Breast epithelium (tissue), 4 donors: ENCODE measurements at regions of chr13 and their contacts with region 1.

Region 1: GRCh38 chr13:26557393-26558023 is at the start of gene WASF3:
- DNase-seq: peak; percentile 85 to 92
- H3K4me3 ChIP-seq: peak within 1 kb of the TSS; percentile 78 to 84 (median 81)
- H3K27ac ChIP-seq: peak within 1 kb of the TSS; percentile 55 to 86
- H3K4me1 ChIP-seq: no peaks in the 10 kb centered on the region
- H3K27me3 ChIP-seq: peaks cover 0 to 3% of the 10 kb centered on the region in 2 donors
- CTCF ChIP-seq: no peak
- POLR2A ChIP-seq: no peak
- total RNA-seq, gene WASF3: 15.2 to 67.0 (median 19.3) TPM

Region 2: DNA sequence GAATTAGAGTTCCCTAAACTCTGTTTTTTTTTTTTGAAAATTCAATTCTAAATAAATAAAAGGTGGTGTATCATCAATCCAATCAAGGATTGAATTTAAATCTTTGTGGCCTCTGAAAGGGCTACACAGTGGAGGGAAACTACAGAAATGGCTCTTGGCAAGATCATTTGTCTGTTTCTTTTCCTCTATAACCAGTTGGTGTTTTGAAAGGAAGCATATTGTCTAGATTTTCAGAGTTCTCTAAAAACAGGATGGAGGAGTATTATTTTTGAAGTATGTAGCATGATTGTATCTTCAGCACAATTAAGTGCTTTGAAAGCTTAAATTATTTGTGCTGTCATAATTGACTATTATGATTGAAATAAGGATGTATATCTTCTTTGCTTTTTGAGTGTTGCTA is 29.7 kb after region 1 on chr13:
- intact Hi-C with region 1: loop called (anchors 2 kb)
- DNase-seq: no peak
- H3K4me3 ChIP-seq: no peak overlapping the region
- H3K27ac ChIP-seq: no peak overlapping the region
- H3K4me1 ChIP-seq: no peaks in the 10 kb centered on the region
- H3K27me3 ChIP-seq: no peaks in the 10 kb centered on the region
- CTCF ChIP-seq: no peak
- POLR2A ChIP-seq: no peak

Region 3: GRCh38 chr13:27043013-27043412 is 485.5 kb after region 1 on chr13:
- intact Hi-C with region 1: no loop called
- DNase-seq: peak; percentile 31 to 63
- H3K4me3 ChIP-seq: no peak overlapping the region
- H3K27ac ChIP-seq: no peak overlapping the region
- H3K4me1 ChIP-seq: no peaks in the 10 kb centered on the region
- H3K27me3 ChIP-seq: no peaks in the 10 kb centered on the region
- CTCF ChIP-seq: no peak
- POLR2A ChIP-seq: no peak

Region 4: DNA sequence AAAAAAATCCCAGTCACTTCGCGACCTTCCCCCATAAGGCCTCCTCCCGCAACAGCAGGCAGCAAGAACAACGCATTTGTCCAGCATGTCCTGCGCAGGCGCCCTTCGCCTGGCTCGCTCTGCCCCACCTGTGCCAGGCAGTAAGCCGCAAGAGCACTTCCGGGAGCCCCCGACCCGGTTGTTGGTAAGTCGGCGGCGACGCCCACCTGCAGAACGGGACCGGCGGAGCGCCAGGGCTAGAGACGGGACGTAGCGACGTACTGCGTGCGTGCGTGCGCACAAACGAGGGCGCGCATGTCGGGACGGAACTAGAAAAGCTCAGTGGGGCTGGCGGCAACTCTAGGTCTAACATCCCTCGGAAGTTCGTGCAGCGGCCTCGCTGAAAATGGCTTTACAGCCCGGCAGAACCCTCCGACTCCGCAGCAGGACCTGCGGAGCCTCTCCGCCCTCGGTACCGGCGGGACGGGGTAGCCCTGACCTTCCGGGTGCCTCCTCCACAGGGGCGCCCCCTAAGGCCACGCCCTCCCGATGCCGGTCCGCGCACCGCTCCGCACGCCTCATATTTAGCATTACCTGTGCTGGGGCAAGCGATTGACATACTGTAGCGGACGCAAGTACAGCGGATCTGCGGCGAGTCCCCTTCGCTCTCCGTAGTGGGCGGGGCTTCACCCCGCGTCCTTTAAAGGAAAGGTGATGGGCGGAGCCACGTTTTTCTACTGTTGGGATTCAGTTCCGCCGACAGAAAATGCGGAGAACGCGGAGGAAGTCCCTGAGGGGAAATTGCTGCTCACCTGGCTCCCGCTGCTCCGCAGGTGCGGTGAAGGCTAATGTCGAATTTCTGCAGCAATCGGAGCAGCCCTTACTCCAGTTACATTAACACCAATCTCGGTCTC is 892.7 kb after region 1 on chr13 and contains the start of gene MTIF3:
- intact Hi-C with region 1: no loop called
- DNase-seq: peak; percentile 94
- H3K4me3 ChIP-seq: peak within 1 kb of the TSS; percentile 87 to 96 (median 90)
- H3K27ac ChIP-seq: peak within 1 kb of the TSS; percentile 96 to 98
- H3K4me1 ChIP-seq: peaks cover 0 to 8% of the 10 kb centered on the region in 2 donors
- H3K27me3 ChIP-seq: no peaks in the 10 kb centered on the region
- CTCF ChIP-seq: no peak
- POLR2A ChIP-seq: peak; percentile 55
- total RNA-seq, gene MTIF3: 67.5 to 146 (median 72.7) TPM